CD4-positive, alpha-beta T cell (primary cell): ENCODE measurements at regions of chr7 and their contacts with region 1.

Region 1: DNA sequence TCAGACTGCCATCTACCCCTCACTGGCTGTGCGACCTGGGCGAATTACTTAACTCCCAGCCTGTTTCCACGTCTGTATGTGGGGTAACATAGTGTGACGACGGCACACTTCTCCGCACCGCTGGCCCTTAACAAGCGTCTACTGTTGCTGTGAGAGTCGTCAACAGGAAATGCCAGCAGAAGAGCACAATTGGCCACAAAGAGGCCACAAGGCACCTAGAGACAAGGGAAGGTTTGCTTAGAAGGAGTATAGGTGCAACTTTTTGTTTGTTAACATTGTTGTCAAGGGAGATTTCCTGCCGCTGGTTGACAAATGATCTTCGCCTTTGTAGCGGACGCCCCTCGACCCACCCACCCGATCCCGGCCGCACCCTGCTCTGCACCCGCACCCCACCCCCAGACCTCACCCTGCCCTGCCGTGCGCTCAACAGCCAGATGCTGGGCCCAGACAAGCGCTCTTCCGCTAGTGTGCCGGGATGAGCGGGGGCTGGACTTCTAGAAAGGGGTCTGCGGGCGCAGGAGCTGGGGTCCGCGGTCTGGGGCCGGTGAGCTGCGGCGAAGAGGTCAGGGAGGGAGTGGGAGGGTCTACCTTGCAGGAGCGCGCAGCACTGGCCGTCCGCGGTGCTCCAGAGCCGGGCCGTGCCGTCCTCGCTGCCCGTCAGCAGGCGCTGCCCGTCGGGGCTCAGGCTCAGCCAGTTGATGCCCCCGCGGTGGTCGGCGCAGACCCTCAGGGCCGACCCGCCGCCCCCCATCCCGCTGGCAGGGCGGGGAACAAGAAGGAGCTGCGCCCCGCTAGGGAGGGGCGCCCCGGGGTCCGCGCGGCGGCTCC is 785 bp downstream of the WDR86 start:
- DNase-seq: peak in 13 of 14 experiments; percentile 27 to 96 (median 67)
- ATAC-seq: peak; percentile 84
- H3K4me3 ChIP-seq: peak overlapping the region; percentile 65
- H3K4me3 Mint-ChIP-seq: peak overlapping the region; percentile 80
- H3K27ac ChIP-seq: peak overlapping the region; percentile 53 to 93
- H3K27ac Mint-ChIP-seq: peak overlapping the region; percentile 79
- H3K4me1 ChIP-seq: peaks cover 59% of the 10 kb centered on the region
- H3K4me1 Mint-ChIP-seq: peaks cover 23% of the 10 kb centered on the region
- H3K27me3 ChIP-seq: peaks cover 22 to 23% of the 10 kb centered on the region in 2 experiments
- H3K27me3 Mint-ChIP-seq: peaks cover 33% of the 10 kb centered on the region
- CTCF ChIP-seq: no peak

Region 2: GRCh38 chr7:151381348-151382078 is 27.5 kb before region 1 on chr7:
- CTCF ChIA-PET with region 1: no interaction called
- POLR2A ChIA-PET with region 1: no interaction called
- intact Hi-C with region 1: loop called in 1 of 2 experiments (anchors 2 kb)
- DNase-seq: peak; percentile 24 to 90 (median 57)
- ATAC-seq: peak; percentile 82
- H3K4me3 ChIP-seq: peak overlapping the region; percentile 58
- H3K4me3 Mint-ChIP-seq: no peak overlapping the region
- H3K27ac ChIP-seq: peak overlapping the region; percentile 29 to 44
- H3K27ac Mint-ChIP-seq: peak overlapping the region; percentile 84
- H3K4me1 ChIP-seq: peaks cover 21% of the 10 kb centered on the region
- H3K4me1 Mint-ChIP-seq: peaks cover 13% of the 10 kb centered on the region
- H3K27me3 ChIP-seq: peaks cover 4 to 7% of the 10 kb centered on the region in 2 experiments
- H3K27me3 Mint-ChIP-seq: peaks cover 18% of the 10 kb centered on the region
- CTCF ChIP-seq: no peak